Activated CD8-positive, alpha-beta T cell treated with anti-CD3 and anti-CD28 coated beads, Interleukin-2, amount 10 ng/mL, durations not matched to agents 7 days and 5 days (primary cell): ENCODE measurements at regions of chr19 and their contacts with region 1.

Region 1: DNA sequence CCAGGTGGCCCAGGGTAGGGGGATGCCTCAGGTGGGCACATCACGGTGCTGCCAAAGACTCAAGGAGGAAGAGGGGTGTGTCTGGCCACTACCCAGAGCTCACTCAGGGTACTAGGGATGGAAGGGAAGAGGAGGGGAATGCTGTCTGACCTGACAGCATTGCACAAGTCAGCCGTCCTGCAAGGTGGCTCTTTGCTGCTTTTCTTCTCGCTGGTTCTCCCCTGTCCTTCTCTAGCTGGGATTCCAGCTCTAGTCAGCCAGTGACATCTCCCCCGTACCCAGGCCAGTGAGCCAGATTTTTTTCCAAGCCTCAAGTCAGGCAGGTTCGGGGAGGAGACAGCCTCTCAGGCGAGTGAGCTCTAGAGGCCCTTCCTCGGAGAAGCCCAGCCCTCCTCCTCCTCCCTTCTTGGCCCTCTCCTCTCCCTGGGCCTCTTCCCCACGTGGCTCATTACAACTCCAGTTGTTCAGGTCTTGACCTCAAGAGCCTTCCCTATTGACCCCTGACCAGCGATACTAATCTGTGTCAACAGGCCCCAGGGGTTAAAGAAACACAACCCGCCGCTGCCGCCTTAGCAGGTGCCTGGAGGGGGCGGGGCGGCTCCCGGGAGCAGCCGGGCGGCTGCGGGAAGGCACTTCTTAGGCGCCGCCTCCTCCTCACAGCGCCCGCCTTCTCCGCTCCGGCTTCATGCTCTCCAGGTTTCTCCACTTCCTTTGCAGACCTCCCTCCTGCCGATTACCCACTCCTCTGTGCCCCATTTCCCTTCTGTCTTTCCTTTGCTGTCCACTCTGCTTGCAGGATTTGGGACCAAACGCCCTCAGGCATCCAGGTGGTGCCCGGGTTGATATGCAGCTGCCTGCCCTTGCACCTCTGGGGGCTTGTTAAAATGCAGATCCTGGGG is 51.1 kb downstream of the LYL1 start:
- DNase-seq: no peak
- ATAC-seq: peak; percentile 57
- H3K4me3 Mint-ChIP-seq: no peak overlapping the region
- H3K27ac Mint-ChIP-seq: no peak overlapping the region
- H3K4me1 Mint-ChIP-seq: peaks cover 7% of the 10 kb centered on the region
- H3K27me3 Mint-ChIP-seq: peaks cover 14% of the 10 kb centered on the region

Region 2: DNA sequence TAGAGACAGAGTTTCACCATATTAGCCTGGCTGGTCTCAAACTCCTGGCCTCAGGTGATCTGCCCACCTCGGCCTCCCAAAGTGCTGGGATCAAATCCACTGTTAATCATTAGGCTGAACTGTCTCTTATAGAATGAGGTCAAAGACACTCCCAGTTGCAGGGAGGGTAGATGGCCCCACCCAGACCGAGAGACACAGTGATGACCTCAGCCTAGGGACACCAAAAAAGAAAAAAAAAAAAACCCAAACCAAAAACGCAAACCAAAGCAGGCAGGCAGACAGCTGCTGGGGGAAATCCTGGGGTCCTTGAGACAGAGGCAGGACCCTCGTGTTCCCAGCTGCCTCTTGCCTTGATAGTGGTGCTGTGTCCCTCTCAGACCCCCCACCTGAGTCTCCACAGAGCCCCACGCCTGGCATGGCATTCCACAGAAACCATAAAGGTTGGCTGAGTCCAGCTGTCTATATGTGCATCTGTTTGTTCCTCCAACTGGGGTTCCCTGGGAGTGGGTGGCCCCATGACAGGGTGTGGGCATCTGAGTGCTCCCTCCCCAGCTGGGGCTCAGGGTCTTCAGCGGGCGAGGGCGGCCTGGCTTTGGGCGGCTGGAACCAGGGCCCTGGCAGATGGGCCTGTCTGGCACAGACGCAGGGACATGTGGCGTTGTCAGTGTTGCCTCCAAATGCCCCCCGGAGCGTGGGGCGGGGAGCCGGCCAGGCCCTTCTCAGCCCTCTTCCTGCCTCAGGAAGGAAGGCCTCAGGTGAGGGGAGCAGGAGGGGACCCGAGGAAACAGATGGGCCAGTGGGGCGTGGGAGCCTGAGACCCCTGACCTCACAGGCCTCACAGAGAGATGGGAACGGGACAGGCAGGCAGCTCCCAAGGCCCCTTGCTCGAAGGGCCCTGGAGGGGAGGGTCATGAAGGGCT is 77.0 kb before region 1 on chr19:
- CTCF ChIA-PET with region 1: interaction called, 21 read pairs
- POLR2A ChIA-PET with region 1: no interaction called
- DNase-seq: no peak
- ATAC-seq: no peak
- H3K4me3 Mint-ChIP-seq: no peak overlapping the region
- H3K27ac Mint-ChIP-seq: no peak overlapping the region
- H3K4me1 Mint-ChIP-seq: no peaks in the 10 kb centered on the region
- H3K27me3 Mint-ChIP-seq: peaks cover 8% of the 10 kb centered on the region